H1 (cell line): ENCODE measurements at regions of chr11 and their contacts with region 1.

Region 1: GRCh38 chr11:122293296-122294023 is 177.4 kb upstream of the BLID start:
- DNase-seq: no peak
- H3K4me3 ChIP-seq: no peak overlapping the region
- H3K27ac ChIP-seq: no peak overlapping the region
- H3K4me1 ChIP-seq: no peaks in the 10 kb centered on the region
- H3K27me3 ChIP-seq: no peaks in the 10 kb centered on the region
- CTCF ChIP-seq: peak in 2 of 3 experiments; percentile 39 to 44; a peak in 3 of 4 replicates
- EP300 ChIP-seq: no peak
- POLR2A ChIP-seq: no peak
- RAD21 ChIP-seq: peak; percentile 77 to 84

Region 2: GRCh38 chr11:122215244-122215992 is 78.0 kb before region 1 on chr11:
- CTCF ChIA-PET with region 1: interaction called, 10 read pairs
- POLR2A ChIA-PET with region 1: no interaction called
- DNase-seq: peak; percentile 68 to 89
- H3K4me3 ChIP-seq: no peak overlapping the region
- H3K27ac ChIP-seq: no peak overlapping the region
- H3K4me1 ChIP-seq: peaks cover 0 to 6% (median 3%) of the 10 kb centered on the region in 4 experiments; a peak in 3 of 7 replicates
- H3K27me3 ChIP-seq: no peaks in the 10 kb centered on the region
- CTCF ChIP-seq: peak; percentile 84 to 94 (median 88)
- EP300 ChIP-seq: no peak
- POLR2A ChIP-seq: no peak
- RAD21 ChIP-seq: peak; percentile 86 to 92